CD4-positive, alpha-beta memory T cell (primary cell): ENCODE measurements at regions of chr11 and their contacts with region 1.

Region 1: DNA sequence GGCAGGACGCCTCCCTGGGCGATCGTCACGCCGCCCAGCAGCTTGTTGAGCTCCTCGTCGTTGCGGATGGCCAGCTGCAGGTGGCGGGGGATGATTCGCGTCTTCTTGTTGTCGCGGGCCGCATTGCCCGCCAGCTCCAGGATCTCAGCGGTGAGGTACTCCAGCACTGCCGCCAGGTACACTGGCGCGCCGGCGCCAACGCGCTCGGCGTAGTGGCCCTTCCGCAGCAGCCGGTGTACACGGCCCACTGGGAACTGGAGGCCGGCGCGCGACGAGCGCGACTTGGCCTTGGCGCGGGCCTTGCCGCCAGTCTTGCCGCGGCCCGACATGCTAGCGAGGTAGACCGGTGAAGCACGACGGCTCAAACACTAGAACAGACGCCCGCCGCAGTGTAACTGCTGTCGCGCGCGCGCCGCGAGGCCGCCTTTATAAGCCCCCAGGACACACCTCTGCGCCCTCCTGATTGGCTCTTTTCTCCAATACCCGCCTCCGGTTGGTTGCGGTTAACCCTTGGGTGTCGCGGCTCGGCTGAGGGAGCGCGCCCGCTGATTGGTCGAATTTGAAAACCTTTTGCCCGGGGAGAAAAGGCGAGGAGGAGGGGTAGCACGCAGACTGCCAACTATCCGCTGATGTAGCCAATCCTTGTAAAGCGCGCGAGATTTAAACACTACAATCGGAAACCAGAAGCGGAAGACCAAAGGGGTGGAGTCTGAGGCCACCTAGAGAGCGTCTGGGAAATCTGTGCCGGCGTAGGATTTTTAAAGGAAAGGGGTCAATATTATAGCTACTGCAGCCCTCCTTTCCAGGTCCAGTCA is 6.4 kb downstream of the DPAGT1 start:
- DNase-seq: peak; percentile 99 to 100 (median 100)
- H3K4me3 ChIP-seq: peak overlapping the region; percentile 42 to 87
- H3K4me3 Mint-ChIP-seq: peak overlapping the region; percentile 84 to 97 (median 93)
- H3K27ac ChIP-seq: peak overlapping the region; percentile 81
- H3K27ac Mint-ChIP-seq: peak overlapping the region; percentile 86 to 96 (median 93)
- H3K4me1 ChIP-seq: peaks cover 34% of the 10 kb centered on the region
- H3K4me1 Mint-ChIP-seq: peaks cover 22 to 52% (median 38%) of the 10 kb centered on the region in 4 donors
- H3K27me3 ChIP-seq: no peaks in the 10 kb centered on the region
- H3K27me3 Mint-ChIP-seq: peaks cover 0 to 1% of the 10 kb centered on the region in 2 donors

Region 2: DNA sequence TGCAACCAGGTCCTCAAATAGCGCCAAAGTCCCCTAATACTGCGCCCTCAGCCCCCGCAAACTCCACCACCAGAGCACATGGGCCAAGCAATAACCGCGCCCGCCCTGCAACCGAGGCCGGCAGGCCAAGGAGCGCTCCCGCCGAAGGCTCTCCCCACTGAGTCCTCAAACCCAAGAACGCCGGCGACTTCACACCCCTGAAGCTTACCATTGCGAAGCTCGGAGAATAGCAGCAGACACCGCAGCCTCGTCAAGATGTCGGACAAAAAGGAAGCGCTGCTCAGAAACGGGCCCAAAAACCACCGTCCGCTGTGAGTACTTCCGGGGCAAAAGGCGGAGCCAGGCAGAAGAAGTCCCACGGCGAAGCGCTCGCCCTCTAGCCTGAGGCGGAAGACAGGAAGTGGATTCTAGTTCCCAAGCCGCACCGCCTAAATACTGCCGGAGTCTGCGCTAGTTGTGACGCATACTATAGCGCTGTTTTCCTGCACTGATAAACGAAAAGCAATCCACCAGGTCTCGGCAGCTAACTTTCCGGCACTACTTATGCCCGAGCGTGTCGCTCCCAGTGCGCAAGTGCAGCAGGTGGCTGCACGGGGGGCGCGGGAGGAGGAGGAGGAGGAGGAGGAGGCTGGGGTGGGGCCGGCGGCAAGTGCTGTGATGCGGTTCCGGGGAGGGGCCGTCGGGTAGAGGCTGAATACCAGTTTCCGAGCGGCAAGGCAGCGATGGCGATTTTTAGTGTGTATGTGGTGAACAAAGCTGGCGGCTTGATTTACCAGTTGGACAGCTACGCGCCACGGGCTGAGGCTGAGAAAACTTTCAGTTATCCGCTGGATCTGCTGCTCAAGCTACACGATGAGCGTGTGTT is 77.0 kb before region 1 on chr11 and contains the starts of genes RPS25 and TRAPPC4:
- CTCF ChIA-PET with region 1: interaction called, 5 read pairs
- POLR2A ChIA-PET with region 1: interaction called, 23 read pairs
- intact Hi-C with region 1: loop called (anchors 1 kb)
- DNase-seq: peak; percentile 96 to 98 (median 97)
- H3K4me3 ChIP-seq: peak within 1 kb of the TSS; percentile 71 to 96
- H3K4me3 Mint-ChIP-seq: peak within 1 kb of the TSS; percentile 94 to 100 (median 99)
- H3K27ac ChIP-seq: peak within 1 kb of the TSS; percentile 87
- H3K27ac Mint-ChIP-seq: peak within 1 kb of the TSS; percentile 98 to 100 (median 100)
- H3K4me1 ChIP-seq: peaks cover 52% of the 10 kb centered on the region
- H3K4me1 Mint-ChIP-seq: peaks cover 21 to 73% (median 51%) of the 10 kb centered on the region in 4 donors
- H3K27me3 ChIP-seq: no peaks in the 10 kb centered on the region
- H3K27me3 Mint-ChIP-seq: no peaks in the 10 kb centered on the region
- total RNA-seq, gene RPS25: 2,545 to 2,705 TPM
- total RNA-seq, gene TRAPPC4: 89.2 to 97.3 TPM

Region 3: DNA sequence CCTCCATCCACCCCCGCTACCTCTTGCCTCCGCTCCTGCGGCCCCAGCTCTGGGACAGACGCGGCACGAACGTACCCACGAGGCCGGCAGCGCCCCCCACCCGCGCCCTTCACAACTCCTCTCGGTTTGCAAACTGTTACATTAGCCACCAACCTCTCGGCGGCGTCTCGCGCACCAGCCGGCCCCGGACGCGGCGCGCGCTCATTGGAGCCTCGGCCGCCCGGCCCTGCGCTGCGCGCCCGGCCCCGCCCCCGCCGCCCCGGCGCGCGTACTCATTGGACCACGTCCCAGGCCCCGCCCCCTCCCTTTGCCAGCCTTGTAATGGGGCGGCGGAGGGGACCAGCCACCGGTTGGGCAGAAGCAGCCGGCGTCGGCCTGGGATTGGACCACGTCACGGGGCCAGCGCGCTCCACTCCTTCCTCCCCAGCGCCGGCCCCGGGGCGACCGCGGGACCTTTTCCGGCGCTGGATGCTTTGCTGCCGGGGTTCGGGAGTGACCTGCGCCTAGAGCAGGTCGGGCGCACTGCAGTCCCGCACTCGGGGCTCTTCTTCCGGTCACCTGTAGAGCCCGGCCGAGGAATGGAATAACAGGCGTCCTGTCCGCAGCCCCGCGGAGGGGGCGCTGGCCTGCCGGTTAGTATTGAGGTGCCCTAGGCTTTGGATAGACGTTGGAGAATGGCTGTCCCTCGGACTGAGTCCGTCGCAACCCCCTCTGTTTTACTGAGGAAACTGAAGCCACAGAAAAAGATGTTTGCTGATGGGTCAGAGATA is 38.1 kb before region 1 on chr11 and contains the start of gene HYOU1:
- CTCF ChIA-PET with region 1: interaction called, 5 read pairs
- POLR2A ChIA-PET with region 1: interaction called, 43 read pairs
- intact Hi-C with region 1: loop called (anchors 1 kb)
- DNase-seq: peak; percentile 98
- H3K4me3 ChIP-seq: peak within 1 kb of the TSS; percentile 82 to 87
- H3K4me3 Mint-ChIP-seq: peak within 1 kb of the TSS; percentile 92 to 98 (median 97)
- H3K27ac ChIP-seq: peak within 1 kb of the TSS; percentile 91
- H3K27ac Mint-ChIP-seq: peak within 1 kb of the TSS; percentile 91 to 98 (median 97)
- H3K4me1 ChIP-seq: peaks cover 25% of the 10 kb centered on the region
- H3K4me1 Mint-ChIP-seq: peaks cover 20 to 52% (median 39%) of the 10 kb centered on the region in 4 donors
- H3K27me3 ChIP-seq: no peaks in the 10 kb centered on the region
- H3K27me3 Mint-ChIP-seq: no peaks in the 10 kb centered on the region
- total RNA-seq, gene HYOU1: 136 to 146 TPM

Region 4: DNA sequence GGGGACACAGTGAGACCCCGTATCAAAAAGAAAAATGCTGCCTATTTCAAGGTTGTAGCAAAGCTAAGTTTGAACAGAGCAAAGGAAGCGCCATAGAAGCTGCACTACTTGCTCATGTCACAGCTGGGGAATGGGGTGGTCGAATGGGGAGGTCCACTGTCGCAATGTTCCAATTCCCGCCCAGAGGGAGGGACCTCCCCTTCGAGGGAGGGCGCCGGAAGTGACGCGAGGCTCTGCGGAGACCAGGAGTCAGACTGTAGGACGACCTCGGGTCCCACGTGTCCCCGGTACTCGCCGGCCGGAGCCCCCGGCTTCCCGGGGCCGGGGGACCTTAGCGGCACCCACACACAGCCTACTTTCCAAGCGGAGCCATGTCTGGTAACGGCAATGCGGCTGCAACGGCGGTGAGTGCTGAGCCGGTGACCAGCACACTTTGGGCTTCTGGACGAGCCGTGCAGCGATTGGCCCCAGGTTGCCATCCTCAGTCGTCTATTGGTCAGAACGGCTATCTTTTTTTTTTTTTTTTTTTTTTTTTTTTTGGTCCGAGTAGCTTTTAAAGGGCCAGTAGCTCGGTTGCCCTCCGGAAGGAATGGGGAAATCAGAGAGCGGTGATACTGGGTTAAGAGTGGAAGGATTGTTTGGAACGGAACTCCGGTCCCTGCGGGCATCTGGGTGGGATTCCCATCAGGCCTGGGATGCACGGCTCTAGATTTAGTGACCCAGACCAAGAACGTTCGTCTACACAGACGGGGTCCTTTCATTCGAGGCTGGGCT is 10.4 kb before region 1 on chr11 and contains the start of gene HMBS:
- CTCF ChIA-PET with region 1: interaction called, 14 read pairs
- POLR2A ChIA-PET with region 1: interaction called, 62 read pairs
- intact Hi-C with region 1: loop called (anchors 1 kb)
- DNase-seq: peak; percentile 88 to 93 (median 89)
- H3K4me3 ChIP-seq: peak within 1 kb of the TSS; percentile 83 to 90
- H3K4me3 Mint-ChIP-seq: peak within 1 kb of the TSS; percentile 92 to 96 (median 94)
- H3K27ac ChIP-seq: peak within 1 kb of the TSS; percentile 76
- H3K27ac Mint-ChIP-seq: peak within 1 kb of the TSS; percentile 93 to 98 (median 96)
- H3K4me1 ChIP-seq: peaks cover 13% of the 10 kb centered on the region
- H3K4me1 Mint-ChIP-seq: peaks cover 9 to 19% (median 14%) of the 10 kb centered on the region in 4 donors
- H3K27me3 ChIP-seq: no peaks in the 10 kb centered on the region
- H3K27me3 Mint-ChIP-seq: no peaks in the 10 kb centered on the region
- total RNA-seq, gene HMBS: 5.1 to 5.8 TPM

Region 5: GRCh38 chr11:119144825-119145486 is 49.7 kb after region 1 on chr11:
- CTCF ChIA-PET with region 1: interaction called, 3 read pairs
- POLR2A ChIA-PET with region 1: interaction called, 6 read pairs
- intact Hi-C with region 1: loop called (anchors 2 kb)
- DNase-seq: peak in 3 of 5 donors; percentile 12 to 48 (median 16)
- H3K4me3 ChIP-seq: no peak overlapping the region
- H3K4me3 Mint-ChIP-seq: no peak overlapping the region
- H3K27ac ChIP-seq: no peak overlapping the region
- H3K27ac Mint-ChIP-seq: no peak overlapping the region
- H3K4me1 ChIP-seq: peaks cover 14% of the 10 kb centered on the region
- H3K4me1 Mint-ChIP-seq: peaks cover 2 to 15% (median 9%) of the 10 kb centered on the region in 4 donors
- H3K27me3 ChIP-seq: peaks cover 13% of the 10 kb centered on the region
- H3K27me3 Mint-ChIP-seq: peaks cover 16 to 32% of the 10 kb centered on the region in 2 donors

Region 6: DNA sequence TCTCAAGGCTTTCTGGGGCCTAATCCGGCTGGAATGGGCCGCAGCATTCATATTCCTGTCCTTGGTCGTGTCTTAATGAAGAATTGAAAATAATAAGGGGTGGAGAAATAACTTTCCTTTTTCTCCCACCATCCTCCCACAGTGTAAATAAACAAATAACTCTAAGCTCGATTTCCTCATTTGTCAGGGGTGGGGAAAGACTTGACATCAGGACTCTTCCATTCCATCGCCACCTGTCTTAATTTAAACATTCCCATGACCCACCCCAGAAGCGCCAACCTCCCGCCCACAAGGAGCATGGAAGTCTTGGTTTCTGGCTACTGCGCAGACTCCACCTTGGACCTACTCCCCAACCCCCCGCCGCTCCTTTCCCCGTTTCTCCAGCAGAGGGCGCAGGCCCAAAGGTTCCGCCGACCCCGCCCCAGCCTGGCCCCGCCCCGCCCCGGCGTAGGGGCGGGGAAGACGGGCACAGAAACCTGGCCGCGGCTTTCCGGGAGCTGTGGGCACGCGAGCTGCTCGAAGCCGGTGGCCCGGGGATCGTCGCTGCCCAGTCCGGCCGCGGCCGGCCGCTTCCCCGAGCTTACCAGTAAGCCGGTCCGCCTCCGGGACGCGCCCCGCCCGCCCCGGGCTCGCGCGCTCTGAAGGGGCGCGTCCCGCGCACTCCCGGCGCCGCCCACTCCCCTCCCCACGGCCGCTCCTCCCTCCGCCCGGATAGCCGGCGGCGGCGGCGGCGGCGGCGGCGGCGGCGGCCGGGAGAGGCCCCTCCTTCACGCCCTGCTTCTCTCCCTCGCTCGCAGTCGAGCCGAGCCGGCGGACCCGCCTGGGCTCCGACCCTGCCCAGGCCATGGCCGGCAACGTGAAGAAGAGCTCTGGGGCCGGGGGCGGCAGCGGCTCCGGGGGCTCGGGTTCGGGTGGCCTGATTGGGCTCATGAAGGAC is 110.6 kb after region 1 on chr11 and contains the start of gene CBL:
- CTCF ChIA-PET with region 1: interaction called, 5 read pairs
- POLR2A ChIA-PET with region 1: interaction called, 11 read pairs
- intact Hi-C with region 1: no loop called
- DNase-seq: peak; percentile 91 to 95 (median 92)
- H3K4me3 ChIP-seq: peak within 1 kb of the TSS; percentile 64 to 94
- H3K4me3 Mint-ChIP-seq: peak within 1 kb of the TSS; percentile 91 to 100 (median 96)
- H3K27ac ChIP-seq: peak within 1 kb of the TSS; percentile 77
- H3K27ac Mint-ChIP-seq: peak within 1 kb of the TSS; percentile 80 to 96 (median 94)
- H3K4me1 ChIP-seq: peaks cover 35% of the 10 kb centered on the region
- H3K4me1 Mint-ChIP-seq: peaks cover 15 to 54% (median 28%) of the 10 kb centered on the region in 4 donors
- H3K27me3 ChIP-seq: no peaks in the 10 kb centered on the region
- H3K27me3 Mint-ChIP-seq: no peaks in the 10 kb centered on the region
- total RNA-seq, gene CBL: 39.5 to 39.8 TPM